Aorta (tissue), 5 donors: ENCODE measurements at regions of chr1 and their contacts with region 1.

Region 1: GRCh38 chr1:203504397-203505250 is 10.7 kb downstream of the OPTC start:
- DNase-seq: peak; percentile 85 to 94
- ATAC-seq: peak; percentile 83
- H3K4me3 ChIP-seq: no peak overlapping the region
- H3K27ac ChIP-seq: no peak overlapping the region
- H3K4me1 ChIP-seq: no peaks in the 10 kb centered on the region
- H3K27me3 ChIP-seq: no peaks in the 10 kb centered on the region

Region 2: GRCh38 chr1:203558064-203558760 is 53.6 kb after region 1 on chr1:
- intact Hi-C with region 1: loop called (anchors 5 kb)
- DNase-seq: peak; percentile 85 to 89
- ATAC-seq: peak; percentile 83
- H3K4me3 ChIP-seq: no peak overlapping the region
- H3K27ac ChIP-seq: peak overlapping the region; percentile 99
- H3K4me1 ChIP-seq: peaks cover 3 to 4% of the 10 kb centered on the region in 2 donors
- H3K27me3 ChIP-seq: no peaks in the 10 kb centered on the region

Region 3: DNA sequence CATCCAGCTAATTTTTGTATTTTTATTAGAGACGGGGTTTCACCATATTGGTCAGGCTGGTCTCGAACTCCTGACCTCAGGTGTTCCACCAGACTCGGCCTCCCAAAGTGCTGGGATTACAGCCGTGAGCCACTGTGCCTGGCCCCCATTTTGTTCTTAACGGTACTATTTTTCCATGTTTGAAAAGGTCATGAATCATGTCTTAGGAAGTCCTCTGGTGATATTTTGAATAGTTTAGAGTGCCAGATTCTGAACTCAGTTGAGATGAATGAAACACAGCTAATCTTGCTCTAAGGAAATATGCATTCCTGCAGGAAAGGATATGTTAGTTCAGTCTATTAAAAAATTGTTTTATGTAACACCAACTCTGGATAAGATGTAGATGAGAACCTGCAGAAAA is 59.4 kb after region 1 on chr1:
- intact Hi-C with region 1: loop called (anchors 5 kb)
- DNase-seq: no peak
- ATAC-seq: peak; percentile 33
- H3K4me3 ChIP-seq: no peak overlapping the region
- H3K27ac ChIP-seq: peak overlapping the region; percentile 15 to 95
- H3K4me1 ChIP-seq: peaks cover 0 to 3% of the 10 kb centered on the region in 2 donors
- H3K27me3 ChIP-seq: no peaks in the 10 kb centered on the region

Region 4: DNA sequence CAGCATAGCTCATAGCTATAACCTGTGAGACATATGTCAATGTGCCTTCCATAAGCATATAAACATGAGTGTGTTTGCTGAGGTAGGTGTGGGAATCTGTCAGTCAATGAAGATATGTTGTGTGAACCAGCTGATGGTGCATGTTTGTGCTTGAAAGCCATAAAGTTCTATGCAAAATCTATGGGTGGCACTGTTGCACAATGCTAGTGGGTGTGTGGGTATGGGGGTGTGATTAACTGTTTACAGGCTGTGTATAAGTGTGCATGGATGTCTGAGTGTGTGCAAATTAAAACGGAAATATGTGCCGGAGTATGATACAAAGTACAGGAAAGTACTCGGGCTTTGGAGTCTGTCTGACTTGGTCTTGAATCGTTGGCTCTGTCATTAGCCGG is 121.0 kb after region 1 on chr1:
- intact Hi-C with region 1: loop called (anchors 5 kb)
- DNase-seq: no peak
- ATAC-seq: peak; percentile 54
- H3K4me3 ChIP-seq: no peak overlapping the region
- H3K27ac ChIP-seq: no peak overlapping the region
- H3K4me1 ChIP-seq: peaks cover 0 to 2% of the 10 kb centered on the region in 2 donors
- H3K27me3 ChIP-seq: no peaks in the 10 kb centered on the region

Region 5: GRCh38 chr1:203692565-203693470 is 188.2 kb after region 1 on chr1:
- intact Hi-C with region 1: loop called in 1 of 2 experiments (anchors 2 kb)
- DNase-seq: peak; percentile 91 to 93
- ATAC-seq: peak; percentile 91
- H3K4me3 ChIP-seq: no peak overlapping the region
- H3K27ac ChIP-seq: peak overlapping the region; percentile 58 to 69
- H3K4me1 ChIP-seq: peaks cover 0 to 4% of the 10 kb centered on the region in 2 donors
- H3K27me3 ChIP-seq: no peaks in the 10 kb centered on the region

Region 6: DNA sequence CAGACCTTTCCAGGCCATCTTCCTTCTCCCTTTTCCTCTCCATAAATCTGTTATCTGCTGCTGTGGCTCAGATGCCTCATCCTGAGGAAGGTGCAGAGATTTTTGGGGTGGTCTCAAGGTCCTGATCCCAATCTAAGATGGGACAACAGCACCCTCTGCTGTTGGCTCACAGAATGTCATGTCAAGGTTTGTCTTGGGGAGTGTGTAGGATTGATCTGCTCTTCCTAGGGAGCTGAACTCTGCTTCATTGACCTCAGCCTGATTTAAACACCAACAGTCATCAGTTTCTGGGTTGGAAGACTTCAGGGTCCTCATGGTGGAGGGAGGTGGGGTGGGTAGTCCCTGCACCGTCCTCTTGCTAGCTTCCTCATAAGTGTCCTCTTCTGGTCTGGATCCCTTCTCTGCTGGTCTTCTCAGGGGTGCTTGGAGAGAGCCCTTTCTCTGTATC is 197.5 kb after region 1 on chr1:
- intact Hi-C with region 1: loop called (anchors 1 kb)
- DNase-seq: no peak
- ATAC-seq: peak; percentile 69
- H3K4me3 ChIP-seq: no peak overlapping the region
- H3K27ac ChIP-seq: no peak overlapping the region
- H3K4me1 ChIP-seq: no peaks in the 10 kb centered on the region
- H3K27me3 ChIP-seq: no peaks in the 10 kb centered on the region